Activated CD4-positive, alpha-beta memory T cell treated with anti-CD3 and anti-CD28 coated beads for 36 hours (primary cell): ENCODE measurements at regions of chr11 and their contacts with region 1.

Region 1: DNA sequence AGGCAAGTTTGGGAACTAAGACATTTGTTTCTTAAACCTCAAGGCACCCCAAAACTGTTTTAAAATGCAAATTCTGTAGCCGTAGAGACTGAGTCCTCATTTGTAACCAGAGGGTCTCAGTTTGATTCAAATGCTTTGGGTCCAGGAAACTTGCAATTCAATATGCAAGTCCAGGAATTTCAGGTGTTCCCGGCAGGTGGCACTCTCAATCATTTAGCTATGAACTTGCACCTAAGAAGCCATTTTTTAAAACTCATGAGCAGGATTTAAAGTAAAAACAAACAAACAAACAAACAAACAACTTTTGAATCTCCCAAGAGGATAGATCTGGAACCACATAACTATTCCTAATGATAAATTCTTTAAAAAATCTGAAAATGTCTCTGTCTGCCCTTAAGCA is 8.7 kb upstream of the ABTB2 start:
- DNase-seq: peak; percentile 35
- H3K4me3 Mint-ChIP-seq: no peak overlapping the region
- H3K27ac Mint-ChIP-seq: no peak overlapping the region
- H3K4me1 Mint-ChIP-seq: peaks cover 11% of the 10 kb centered on the region
- H3K27me3 Mint-ChIP-seq: peaks cover 24% of the 10 kb centered on the region

Region 2: DNA sequence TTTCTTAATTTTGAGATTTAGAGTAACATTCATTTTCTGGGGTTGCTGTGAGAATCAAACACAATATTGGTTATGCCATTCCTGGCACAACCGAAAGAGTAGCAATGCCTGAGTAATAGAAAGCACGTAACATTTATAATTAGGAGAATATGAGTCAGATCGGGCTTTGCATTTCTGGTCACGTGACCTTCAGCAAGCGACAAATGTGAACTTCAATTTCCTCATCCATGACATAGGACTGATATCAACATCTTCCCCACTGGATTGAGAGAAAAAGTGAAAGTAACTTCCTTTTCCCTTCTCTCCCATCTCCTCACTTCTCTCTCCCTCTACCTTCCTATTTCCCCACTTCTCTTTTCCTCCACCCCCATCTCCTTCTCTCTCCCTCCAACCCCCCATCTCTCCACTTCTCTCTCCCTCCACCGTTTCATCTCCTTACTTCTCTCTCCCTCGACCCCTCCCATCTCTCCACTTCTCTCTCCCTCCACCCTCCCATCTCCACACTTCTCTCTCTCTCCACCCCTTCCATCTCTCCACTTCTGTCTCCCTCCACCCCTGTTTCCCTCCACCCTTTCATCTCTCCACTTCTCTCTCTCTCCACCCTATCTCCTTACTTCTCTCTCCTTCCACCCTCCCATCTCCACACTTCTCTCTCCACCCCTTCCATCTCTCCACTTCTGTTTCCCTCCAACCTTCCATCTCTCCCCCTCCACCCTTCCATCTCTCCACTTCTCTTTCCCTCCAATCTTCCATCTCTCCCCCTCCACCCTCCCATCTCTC is 38.7 kb after region 1 on chr11:
- CTCF ChIA-PET with region 1: no interaction called
- POLR2A ChIA-PET with region 1: no interaction called
- intact Hi-C with region 1: loop called (anchors 1 kb)
- DNase-seq: peak; percentile 32
- H3K4me3 Mint-ChIP-seq: peak overlapping the region; percentile 14
- H3K27ac Mint-ChIP-seq: no peak overlapping the region
- H3K4me1 Mint-ChIP-seq: peaks cover 18% of the 10 kb centered on the region
- H3K27me3 Mint-ChIP-seq: peaks cover 14% of the 10 kb centered on the region

Region 3: DNA sequence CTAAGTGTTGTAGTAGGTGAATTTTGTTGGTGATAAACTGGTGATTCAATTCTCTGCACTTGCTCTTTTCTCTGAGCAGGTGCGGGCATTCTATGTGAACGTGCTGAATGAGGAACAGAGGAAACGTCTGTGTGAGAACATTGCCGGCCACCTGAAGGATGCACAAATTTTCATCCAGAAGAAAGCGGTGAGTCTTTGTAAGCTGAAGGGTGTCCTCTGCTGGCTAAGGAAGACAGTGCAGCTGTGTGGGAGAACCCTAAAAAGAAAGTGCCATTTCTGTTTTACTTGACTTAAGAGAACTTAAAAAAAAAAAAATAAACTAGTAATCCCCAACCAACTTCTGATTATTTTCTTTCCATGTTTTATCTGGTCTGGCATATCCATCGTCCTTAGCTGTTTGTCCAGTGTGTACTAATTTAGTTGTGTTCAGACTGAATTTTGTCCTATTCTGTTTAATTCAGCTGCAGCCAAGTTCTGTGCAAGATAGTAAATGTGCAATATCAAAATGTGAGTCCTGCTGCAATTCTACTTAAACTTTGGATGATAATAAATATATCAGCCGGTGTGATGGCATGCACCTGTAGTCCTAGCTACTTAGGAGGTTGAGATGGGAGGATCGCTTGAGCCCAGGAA is 101.8 kb after region 1 on chr11:
- CTCF ChIA-PET with region 1: interaction called, 26 read pairs
- POLR2A ChIA-PET with region 1: no interaction called
- intact Hi-C with region 1: loop called (anchors 1 kb)
- DNase-seq: peak; percentile 67
- H3K4me3 Mint-ChIP-seq: no peak overlapping the region
- H3K27ac Mint-ChIP-seq: no peak overlapping the region
- H3K4me1 Mint-ChIP-seq: peaks cover 7% of the 10 kb centered on the region
- H3K27me3 Mint-ChIP-seq: no peaks in the 10 kb centered on the region

Region 4: DNA sequence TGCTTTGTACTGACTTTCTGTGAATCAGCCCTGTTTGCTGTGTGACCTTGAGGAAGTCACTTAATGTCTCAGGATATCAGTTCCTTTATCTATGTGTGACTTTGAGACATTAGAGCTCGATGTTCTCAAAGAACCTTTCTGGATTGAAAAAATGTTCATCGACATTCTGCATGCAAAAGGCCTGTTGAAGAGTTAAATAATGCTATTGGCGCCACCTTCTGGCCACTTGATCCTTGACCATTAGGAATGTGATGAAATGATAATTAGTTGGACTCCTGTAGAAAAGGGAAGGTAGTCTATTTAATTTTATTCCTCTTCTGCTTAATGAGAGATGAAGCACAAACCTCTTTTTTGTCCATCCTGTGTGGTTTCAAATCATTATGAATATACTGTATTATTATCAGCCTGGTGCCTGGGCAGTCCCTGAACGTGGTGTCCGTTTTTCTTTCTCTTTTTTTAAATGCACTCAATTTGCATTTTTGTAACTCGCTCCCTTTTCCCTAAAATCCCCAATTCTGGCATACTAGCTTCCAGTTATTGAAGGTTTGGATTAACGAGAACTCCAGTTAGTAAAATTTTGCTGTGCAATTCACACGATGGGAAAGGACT is 126.4 kb after region 1 on chr11:
- CTCF ChIA-PET with region 1: interaction called, 12 read pairs
- POLR2A ChIA-PET with region 1: no interaction called
- intact Hi-C with region 1: no loop called
- DNase-seq: peak; percentile 51
- H3K4me3 Mint-ChIP-seq: no peak overlapping the region
- H3K27ac Mint-ChIP-seq: no peak overlapping the region
- H3K4me1 Mint-ChIP-seq: no peaks in the 10 kb centered on the region
- H3K27me3 Mint-ChIP-seq: peaks cover 3% of the 10 kb centered on the region

Region 5: DNA sequence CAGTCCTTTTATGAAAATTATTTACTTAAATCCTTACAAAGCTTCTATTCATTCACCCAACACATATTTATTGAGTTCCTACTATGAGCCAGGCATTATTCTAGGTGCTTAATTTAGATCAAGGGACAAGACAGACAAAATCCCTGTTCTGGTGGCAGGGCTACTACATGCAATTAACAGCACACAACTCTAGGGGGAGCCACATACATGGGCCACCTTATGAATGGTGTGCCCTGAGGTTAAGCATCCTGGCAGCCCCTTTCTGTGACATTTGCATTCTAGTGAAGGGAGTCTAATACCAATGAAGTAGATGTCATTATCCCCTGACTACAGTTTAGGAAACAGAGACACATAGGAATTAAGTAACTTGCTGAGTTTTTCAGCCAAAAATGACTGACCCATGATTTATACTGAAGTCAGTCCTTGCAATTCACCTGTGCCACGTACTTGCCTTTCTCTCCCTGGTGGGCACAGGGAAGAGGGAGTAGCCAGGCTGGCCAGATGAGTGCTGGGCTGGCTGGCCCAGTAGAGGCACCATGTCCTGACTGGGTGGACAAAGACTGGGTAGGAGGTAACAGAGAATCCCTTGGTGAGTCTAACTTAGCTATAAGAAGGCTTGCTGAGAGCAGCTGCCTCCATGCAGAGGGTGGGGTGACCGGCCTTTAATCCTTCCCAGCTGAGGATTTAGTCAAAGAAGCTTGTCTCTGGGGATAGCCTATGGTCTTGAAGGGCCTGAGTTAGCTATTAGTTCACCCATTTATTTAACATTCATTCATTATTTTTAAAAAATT is 199.1 kb after region 1 on chr11:
- CTCF ChIA-PET with region 1: no interaction called
- POLR2A ChIA-PET with region 1: no interaction called
- intact Hi-C with region 1: no loop called
- DNase-seq: peak; percentile 27
- H3K4me3 Mint-ChIP-seq: no peak overlapping the region
- H3K27ac Mint-ChIP-seq: no peak overlapping the region
- H3K4me1 Mint-ChIP-seq: no peaks in the 10 kb centered on the region
- H3K27me3 Mint-ChIP-seq: peaks cover 12% of the 10 kb centered on the region